ENCODE measurements at regions of chr16 and their contacts with region 1.

Region 1: DNA sequence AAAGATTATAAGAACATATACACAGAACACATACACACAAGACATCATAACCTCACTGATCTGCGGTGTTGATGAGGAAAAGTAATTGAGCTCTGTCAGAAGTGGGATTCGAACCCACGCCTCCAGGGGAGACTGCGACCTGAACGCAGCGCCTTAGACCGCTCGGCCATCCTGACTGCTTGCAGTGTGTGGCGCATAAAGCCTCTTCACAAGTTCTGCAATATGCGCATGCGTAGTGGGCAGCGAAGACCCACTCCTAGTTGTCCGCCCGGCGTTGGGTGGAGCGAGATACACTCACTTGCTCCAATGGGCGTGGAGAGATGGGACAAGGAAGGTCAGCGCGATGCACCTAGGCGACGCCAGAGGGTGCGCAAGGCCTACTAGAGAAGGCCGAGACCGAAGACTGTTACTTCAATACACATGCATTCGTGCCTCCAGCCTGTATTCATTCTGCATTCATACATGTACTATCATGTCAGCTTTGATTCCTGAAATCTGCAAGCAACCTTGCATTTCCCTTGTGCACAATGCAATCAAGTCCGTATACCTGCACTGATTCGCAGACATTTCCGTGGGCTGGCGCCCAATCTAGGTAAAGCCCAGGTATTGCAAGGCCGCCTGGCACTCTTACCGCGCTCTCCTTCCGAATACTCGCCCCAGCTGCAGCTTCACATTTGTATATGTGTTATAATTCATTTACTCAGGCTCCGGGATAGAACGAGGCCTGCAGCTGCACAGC is 16.1 kb upstream of the PLLP start:
- DNase-seq: peak; percentile 100
- ATAC-seq: peak; percentile 92
- H3K4me3 Mint-ChIP-seq: no peak overlapping the region
- H3K27ac Mint-ChIP-seq: no peak overlapping the region
- H3K4me1 Mint-ChIP-seq: peaks cover 32% of the 10 kb centered on the region
- H3K27me3 Mint-ChIP-seq: no peaks in the 10 kb centered on the region
- CTCF ChIP-seq: peak; percentile 75

Region 2: DNA sequence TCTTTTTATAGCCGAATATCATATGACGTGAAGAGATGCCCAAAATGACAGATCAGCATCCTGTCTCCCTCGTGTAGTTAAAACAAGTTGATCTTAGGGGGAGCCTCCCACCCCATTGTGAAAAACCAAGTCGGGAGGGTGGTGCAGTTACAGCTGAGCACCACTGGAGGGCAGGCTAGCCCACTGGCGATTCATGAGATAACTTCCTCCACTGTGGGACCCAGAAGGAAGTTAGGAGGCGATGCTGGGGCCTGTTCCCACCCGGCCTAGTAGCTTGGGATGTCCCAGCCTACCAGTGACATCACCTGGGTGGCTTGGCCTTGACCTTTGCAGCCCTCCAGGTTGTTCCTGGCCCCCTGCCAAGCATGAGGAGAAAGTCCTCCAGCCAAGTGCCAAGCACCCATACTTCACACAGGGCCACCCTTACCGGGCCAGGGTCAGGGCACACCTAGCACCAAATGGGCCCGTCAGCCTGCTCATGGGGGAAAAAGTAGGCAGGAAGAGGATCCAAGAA is 216.2 kb before region 1 on chr16:
- CTCF ChIA-PET with region 1: no interaction called
- POLR2A ChIA-PET with region 1: no interaction called
- intact Hi-C with region 1: loop called (anchors 2 kb)
- DNase-seq: peak; percentile 50
- ATAC-seq: peak; percentile 89
- H3K4me3 Mint-ChIP-seq: no peak overlapping the region
- H3K27ac Mint-ChIP-seq: peak overlapping the region; percentile 57
- H3K4me1 Mint-ChIP-seq: peaks cover 8% of the 10 kb centered on the region
- H3K27me3 Mint-ChIP-seq: no peaks in the 10 kb centered on the region
- CTCF ChIP-seq: peak; percentile 77

Region 3: DNA sequence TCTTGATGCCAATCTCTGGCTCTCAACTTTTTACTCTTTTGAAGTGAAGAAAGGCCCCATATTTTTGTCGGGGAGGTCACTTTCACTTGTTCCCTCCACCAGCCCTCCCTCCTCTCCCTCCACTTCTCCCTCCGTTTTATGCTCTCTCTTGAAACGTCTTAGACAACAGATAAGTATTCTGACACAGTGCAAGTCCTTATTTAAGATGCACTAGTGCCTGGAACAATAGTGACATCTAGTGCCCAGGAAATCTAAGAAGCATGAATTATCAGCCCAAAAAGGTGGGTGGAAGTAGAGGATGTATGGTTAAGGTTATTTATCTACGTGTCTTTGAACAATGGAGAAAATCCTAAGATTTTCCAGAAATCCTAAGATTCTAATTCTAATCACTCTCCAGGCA is 132.6 kb before region 1 on chr16:
- CTCF ChIA-PET with region 1: no interaction called
- POLR2A ChIA-PET with region 1: no interaction called
- intact Hi-C with region 1: no loop called
- DNase-seq: no peak
- ATAC-seq: peak; percentile 67
- H3K4me3 Mint-ChIP-seq: no peak overlapping the region
- H3K27ac Mint-ChIP-seq: no peak overlapping the region
- H3K4me1 Mint-ChIP-seq: peaks cover 14% of the 10 kb centered on the region
- H3K27me3 Mint-ChIP-seq: no peaks in the 10 kb centered on the region
- CTCF ChIP-seq: no peak

Region 4: GRCh38 chr16:57284208-57284951 is 16.2 kb before region 1 on chr16 and contains the start of gene PLLP:
- CTCF ChIA-PET with region 1: no interaction called
- POLR2A ChIA-PET with region 1: interaction called, 5 read pairs
- intact Hi-C with region 1: loop called (anchors 1 kb)
- DNase-seq: peak; percentile 57
- ATAC-seq: peak; percentile 61
- H3K4me3 Mint-ChIP-seq: peak within 1 kb of the TSS; percentile 74
- H3K27ac Mint-ChIP-seq: no peak within 1 kb of the TSS
- H3K4me1 Mint-ChIP-seq: peaks cover 6% of the 10 kb centered on the region
- H3K27me3 Mint-ChIP-seq: peaks cover 21% of the 10 kb centered on the region
- CTCF ChIP-seq: no peak
- total RNA-seq, gene PLLP: not detected in 2 replicates

Region 5: DNA sequence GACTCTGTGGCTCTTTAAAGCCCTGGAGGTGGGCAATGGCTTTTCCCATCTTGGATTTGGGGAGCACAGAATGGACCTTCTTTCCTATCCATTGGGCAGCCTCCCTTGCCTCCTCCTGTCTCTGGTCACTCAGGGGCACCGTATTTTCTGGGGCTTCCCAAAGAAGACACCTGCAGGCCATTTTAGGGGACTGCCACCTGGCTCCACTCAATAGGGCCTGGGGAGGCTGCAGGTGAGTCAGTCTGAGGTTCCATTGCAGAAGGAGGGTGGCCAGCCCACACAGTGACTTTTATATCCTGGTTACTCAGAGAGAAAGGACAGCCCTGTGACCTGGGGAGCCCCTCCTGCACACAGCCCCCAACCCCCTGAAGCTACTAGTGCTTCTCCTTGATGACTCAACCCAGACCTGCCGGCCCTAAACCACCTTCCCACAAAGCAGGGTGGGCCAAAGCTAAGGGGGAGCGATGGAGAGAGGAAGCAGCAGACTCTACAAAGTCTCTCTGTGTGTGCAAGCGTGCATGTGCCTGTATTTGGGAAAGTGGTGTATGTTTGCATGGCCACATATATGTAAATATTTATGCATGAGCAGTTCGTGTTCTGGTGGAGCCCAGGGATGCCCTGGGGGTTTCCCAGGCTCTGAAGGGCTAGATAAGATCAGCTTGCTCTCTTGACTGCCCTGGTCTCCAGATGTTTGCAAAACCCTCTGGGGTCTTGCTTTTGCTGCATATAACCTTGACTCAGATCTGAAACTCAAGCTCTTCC is 76.7 kb after region 1 on chr16:
- CTCF ChIA-PET with region 1: interaction called, 12 read pairs
- POLR2A ChIA-PET with region 1: interaction called, 4 read pairs
- intact Hi-C with region 1: loop called (anchors 1 kb)
- DNase-seq: peak; percentile 46
- ATAC-seq: peak; percentile 82
- H3K4me3 Mint-ChIP-seq: peak overlapping the region; percentile 29
- H3K27ac Mint-ChIP-seq: peak overlapping the region; percentile 86
- H3K4me1 Mint-ChIP-seq: peaks cover 43% of the 10 kb centered on the region
- H3K27me3 Mint-ChIP-seq: no peaks in the 10 kb centered on the region
- CTCF ChIP-seq: no peak

Region 6: DNA sequence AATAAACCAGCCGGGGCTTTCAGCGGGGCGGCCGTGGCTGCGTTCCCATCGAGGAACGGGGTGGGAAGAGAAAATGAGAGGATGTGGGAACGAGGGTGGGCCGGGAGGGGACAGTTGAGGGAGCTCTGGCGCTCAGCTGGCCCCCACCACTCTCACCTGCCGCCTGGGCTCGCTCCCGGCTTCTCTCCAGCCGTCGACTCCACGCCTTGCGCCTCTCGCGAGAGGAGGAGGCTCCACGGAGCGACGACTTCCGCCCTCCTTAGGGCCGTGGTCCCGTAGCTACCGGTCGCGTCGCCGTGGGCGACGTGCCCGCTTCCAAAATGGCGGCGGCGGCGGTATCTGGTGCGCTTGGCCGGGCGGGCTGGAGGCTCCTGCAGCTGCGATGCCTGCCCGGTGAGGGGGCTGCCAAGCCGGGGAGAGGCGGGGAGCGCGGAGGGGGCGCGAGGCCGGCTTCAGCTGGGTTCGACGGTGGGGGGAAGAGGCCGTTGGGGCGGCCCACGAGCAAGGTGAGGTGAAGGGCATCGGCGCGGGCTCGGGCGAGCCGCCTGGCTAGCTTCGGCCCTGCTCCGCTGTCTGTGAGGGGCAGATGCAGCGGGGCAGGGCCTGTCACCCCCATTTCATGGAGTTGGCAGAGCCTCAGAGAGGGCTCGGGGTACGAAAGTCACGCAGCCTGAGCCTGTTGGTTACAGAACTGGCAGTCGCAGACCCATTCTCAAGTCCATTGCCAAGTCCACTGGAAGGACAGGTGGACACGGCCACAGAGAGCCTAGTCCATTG is 146.8 kb after region 1 on chr16 and contains the starts of genes CIAPIN1 and COQ9:
- CTCF ChIA-PET with region 1: interaction called, 3 read pairs
- POLR2A ChIA-PET with region 1: interaction called, 7 read pairs
- intact Hi-C with region 1: loop called (anchors 1 kb)
- DNase-seq: peak; percentile 82
- ATAC-seq: peak; percentile 98
- H3K4me3 Mint-ChIP-seq: peak within 1 kb of the TSS; percentile 91
- H3K27ac Mint-ChIP-seq: peak within 1 kb of the TSS; percentile 84
- H3K4me1 Mint-ChIP-seq: peaks cover 19% of the 10 kb centered on the region
- H3K27me3 Mint-ChIP-seq: no peaks in the 10 kb centered on the region
- CTCF ChIP-seq: no peak
- total RNA-seq, gene CIAPIN1: 47.1 and 52.3 TPM in 2 replicates
- total RNA-seq, gene COQ9: 30.4 and 34.1 TPM in 2 replicates

Region 7: GRCh38 chr16:57544119-57544653 is 243.6 kb after region 1 on chr16:
- CTCF ChIA-PET with region 1: no interaction called
- POLR2A ChIA-PET with region 1: interaction called, 3 read pairs
- intact Hi-C with region 1: loop called (anchors 2 kb)
- DNase-seq: peak; percentile 64
- ATAC-seq: peak; percentile 79
- H3K4me3 Mint-ChIP-seq: peak overlapping the region; percentile 88
- H3K27ac Mint-ChIP-seq: peak overlapping the region; percentile 79
- H3K4me1 Mint-ChIP-seq: peaks cover 87% of the 10 kb centered on the region
- H3K27me3 Mint-ChIP-seq: no peaks in the 10 kb centered on the region
- CTCF ChIP-seq: no peak